PC-9 (cell line): ENCODE measurements at regions of chr22 and their contacts with region 1.

Region 1: DNA sequence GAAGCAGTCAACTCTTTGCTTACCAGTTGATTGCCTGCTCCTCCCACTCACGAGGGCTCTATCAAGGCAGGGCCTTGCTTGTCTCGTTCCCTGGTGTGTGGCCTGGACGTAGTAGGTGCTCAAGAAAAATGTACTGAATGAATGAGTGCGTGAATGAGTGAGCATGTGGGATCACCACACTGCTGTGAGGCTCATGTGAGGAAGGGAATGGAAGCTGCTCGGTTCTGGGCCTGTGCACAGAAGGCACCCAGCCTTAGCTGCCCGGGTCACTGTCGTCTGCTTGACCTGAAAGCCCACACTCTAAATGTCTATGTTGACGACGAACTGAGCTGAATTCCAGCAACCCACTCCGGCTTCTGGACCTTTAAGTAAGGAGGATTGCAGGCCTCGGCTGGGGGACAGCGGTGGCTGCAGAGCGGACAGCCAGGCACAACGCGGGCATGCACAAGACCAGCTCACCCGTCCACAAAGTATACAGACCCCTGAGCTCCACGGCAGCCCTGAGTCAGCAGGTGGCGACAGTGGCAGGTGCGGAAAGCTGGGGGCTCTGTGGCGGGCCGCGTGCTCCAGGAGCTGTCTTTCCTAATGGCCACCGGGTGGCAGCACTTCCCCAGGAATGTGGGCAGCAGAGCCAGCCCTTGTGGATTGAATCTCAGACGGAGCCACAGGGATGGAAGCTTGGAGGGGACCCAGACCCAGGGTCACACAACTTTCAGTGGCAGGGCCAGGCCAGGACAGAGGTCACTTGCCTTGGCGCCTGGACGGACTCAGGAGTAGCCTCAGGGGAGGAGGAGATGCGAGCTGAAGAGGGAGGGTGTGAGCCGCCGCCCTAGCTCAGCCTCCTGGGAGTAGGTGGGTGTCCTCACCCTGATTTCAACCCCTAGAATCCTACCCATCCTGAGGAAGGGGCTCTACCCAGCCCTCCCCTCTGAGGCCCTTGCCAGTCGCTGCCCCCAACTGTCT is 5.0 kb upstream of the PICK1 start:
- DNase-seq: peak; percentile 70 to 85
- H3K4me3 ChIP-seq: no peak overlapping the region
- H3K27ac ChIP-seq: no peak overlapping the region
- H3K4me1 ChIP-seq: no peaks in the 10 kb centered on the region
- H3K27me3 ChIP-seq: no peaks in the 10 kb centered on the region
- CTCF ChIP-seq: peak; percentile 97

Region 2: GRCh38 chr22:37824674-37825641 is 227.2 kb before region 1 on chr22:
- CTCF ChIA-PET with region 1: no interaction called
- POLR2A ChIA-PET with region 1: interaction called, 17 read pairs
- intact Hi-C with region 1: no loop called
- DNase-seq: no peak
- H3K4me3 ChIP-seq: no peak overlapping the region
- H3K27ac ChIP-seq: no peak overlapping the region
- H3K4me1 ChIP-seq: no peaks in the 10 kb centered on the region
- H3K27me3 ChIP-seq: no peaks in the 10 kb centered on the region
- CTCF ChIP-seq: no peak

Region 3: GRCh38 chr22:38353142-38353629 is 301.0 kb after region 1 on chr22:
- CTCF ChIA-PET with region 1: no interaction called
- POLR2A ChIA-PET with region 1: no interaction called
- intact Hi-C with region 1: loop called (anchors 1 kb)
- DNase-seq: peak; percentile 42 to 85
- H3K4me3 ChIP-seq: no peak overlapping the region
- H3K27ac ChIP-seq: no peak overlapping the region
- H3K4me1 ChIP-seq: peaks cover 8% of the 10 kb centered on the region
- H3K27me3 ChIP-seq: no peaks in the 10 kb centered on the region
- CTCF ChIP-seq: peak; percentile 100

Region 4: DNA sequence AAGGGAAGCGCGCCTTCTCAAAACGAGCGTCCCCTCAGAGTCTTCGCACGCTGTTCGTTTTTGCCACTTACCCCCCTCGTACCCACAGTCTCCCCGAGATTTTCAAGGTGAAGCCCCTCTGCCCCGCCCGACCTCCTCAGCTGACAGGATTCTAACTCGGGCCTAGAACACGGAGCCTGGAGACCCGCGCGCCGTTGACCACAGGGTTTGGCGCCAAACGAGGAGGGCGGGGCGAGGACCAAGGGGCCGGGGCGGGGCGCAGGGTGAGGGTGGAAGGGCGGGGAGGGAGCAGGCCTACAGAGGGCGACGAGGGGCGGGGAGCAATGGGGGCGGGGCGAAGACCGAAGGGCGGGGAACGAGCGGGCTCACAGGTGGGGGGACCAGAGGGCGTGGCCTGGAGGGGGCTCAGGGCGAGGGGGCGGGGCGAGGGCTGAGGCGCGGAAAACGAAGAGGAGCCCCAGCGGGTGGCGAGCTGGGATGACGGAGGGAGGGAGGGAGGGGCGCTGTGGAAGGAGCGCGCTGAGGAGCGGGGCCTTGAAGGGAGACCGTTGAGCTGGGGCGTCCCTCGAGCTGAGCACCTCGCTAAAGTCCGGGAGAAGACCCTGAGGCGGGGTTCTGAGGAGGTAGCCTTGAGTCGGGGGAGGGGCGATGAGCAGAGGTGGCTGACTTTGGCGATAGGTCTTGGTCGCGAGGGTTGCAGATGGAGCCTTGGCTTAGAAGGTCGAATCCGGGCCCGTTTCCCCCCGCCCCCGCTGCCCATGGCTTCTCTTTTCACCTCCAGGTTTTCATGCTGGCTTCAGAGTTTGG is 518.0 kb after region 1 on chr22 and contains the start of gene DMC1:
- CTCF ChIA-PET with region 1: interaction called, 11 read pairs
- POLR2A ChIA-PET with region 1: no interaction called
- intact Hi-C with region 1: no loop called
- DNase-seq: peak; percentile 77 to 91
- H3K4me3 ChIP-seq: peak within 1 kb of the TSS; percentile 64
- H3K27ac ChIP-seq: no peak within 1 kb of the TSS
- H3K4me1 ChIP-seq: peaks cover 10% of the 10 kb centered on the region
- H3K27me3 ChIP-seq: no peaks in the 10 kb centered on the region
- CTCF ChIP-seq: no peak
- total RNA-seq, gene DMC1: 5.6 and 6.3 TPM in 2 replicates

Region 5: GRCh38 chr22:38696606-38697424 is 644.6 kb after region 1 on chr22:
- CTCF ChIA-PET with region 1: no interaction called
- POLR2A ChIA-PET with region 1: interaction called, 10 read pairs
- intact Hi-C with region 1: no loop called
- DNase-seq: peak; percentile 64 to 89
- H3K4me3 ChIP-seq: peak overlapping the region; percentile 82
- H3K27ac ChIP-seq: peak overlapping the region; percentile 88
- H3K4me1 ChIP-seq: peaks cover 56% of the 10 kb centered on the region
- H3K27me3 ChIP-seq: no peaks in the 10 kb centered on the region
- CTCF ChIP-seq: no peak

Region 6: DNA sequence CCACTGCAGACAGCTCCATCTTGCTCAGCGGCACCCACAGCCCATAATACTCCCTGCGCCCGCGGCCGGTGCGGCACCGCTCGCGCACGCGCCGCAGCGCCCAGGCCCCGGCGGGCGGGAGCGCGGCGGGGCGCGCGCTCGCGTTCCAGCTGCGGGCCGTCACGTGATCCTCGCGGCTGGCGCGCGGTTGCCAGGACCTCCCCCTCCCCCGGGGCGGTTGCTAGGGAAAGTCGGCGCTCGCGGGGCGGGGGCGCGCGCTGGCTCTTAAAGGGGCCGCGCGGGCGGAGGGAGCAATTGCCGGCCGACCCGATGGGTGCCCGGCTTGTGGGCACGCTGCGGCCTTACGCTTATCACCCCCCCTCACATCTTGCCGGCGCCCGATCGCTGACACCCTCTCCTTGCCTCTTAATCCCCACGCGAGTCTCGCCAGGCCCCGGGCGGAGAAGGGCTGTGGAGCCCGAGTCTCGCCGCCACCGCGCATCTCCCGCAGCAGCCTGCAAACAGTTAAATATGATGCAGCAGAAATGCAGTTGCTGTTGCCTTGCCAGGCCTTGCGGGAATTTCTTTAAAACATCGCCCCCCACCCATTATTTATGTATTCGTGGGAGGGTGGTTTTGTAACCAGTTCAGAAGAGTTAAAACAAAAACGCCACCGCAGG is 820.1 kb after region 1 on chr22 and contains the start of gene CBX6:
- CTCF ChIA-PET with region 1: no interaction called
- POLR2A ChIA-PET with region 1: no interaction called
- intact Hi-C with region 1: loop called (anchors 5 kb)
- DNase-seq: peak; percentile 73 to 97
- H3K4me3 ChIP-seq: peak within 1 kb of the TSS; percentile 83
- H3K27ac ChIP-seq: peak within 1 kb of the TSS; percentile 62
- H3K4me1 ChIP-seq: peaks cover 28% of the 10 kb centered on the region
- H3K27me3 ChIP-seq: no peaks in the 10 kb centered on the region
- CTCF ChIP-seq: no peak
- total RNA-seq, gene CBX6: 131 and 136 TPM in 2 replicates